ENCODE measurements at regions of chr11 and their contacts with region 1.

Region 1: GRCh38 chr11:68354148-68354872 is 41.9 kb downstream of the LRP5 start:
- DNase-seq: peak; percentile 53 to 94
- H3K4me3 ChIP-seq: peak overlapping the region in 1 of 2 donors; percentile 25
- H3K27ac ChIP-seq: peak overlapping the region; percentile 73 to 94
- H3K4me1 ChIP-seq: peaks cover 26 to 65% of the 10 kb centered on the region in 2 donors
- H3K27me3 ChIP-seq: no peaks in the 10 kb centered on the region
- CTCF ChIP-seq: no peak

Region 2: DNA sequence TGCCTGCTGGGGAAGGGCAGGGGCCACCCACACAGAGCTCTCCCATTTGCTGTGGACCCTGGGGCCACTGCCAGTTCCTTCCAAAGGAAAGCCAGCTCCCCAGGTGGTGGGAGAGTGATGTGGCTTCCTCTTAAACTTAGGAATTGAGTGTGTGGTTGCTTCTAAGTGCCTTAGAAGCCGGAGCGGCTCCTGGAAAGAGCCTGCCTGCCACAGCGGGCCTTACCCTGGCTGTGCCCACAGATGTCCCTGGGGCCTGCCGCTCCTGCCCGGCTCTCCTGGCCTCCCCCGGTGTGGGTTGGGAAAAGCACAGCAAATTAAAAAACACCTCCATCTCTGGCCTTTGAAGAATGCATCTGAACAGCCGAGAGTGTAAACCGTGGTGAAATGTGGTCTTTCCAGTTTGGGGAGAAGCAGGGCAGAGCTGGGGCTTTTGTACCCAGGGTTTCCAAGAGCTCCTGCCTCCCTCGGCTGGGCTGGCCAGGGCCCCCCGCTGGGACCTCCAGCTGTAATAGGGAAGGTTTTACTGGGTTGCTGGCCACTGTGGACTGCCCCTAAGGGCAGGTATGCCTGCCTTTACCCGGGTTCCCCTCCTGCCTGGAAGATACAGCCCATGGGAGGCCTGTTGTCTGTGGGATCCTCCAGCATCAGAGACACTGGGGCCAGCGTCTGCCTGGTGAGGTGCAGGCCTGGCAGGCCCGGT is 11.7 kb before region 1 on chr11:
- intact Hi-C with region 1: loop called (anchors 2 kb)
- DNase-seq: no peak
- H3K4me3 ChIP-seq: peak overlapping the region; percentile 1 to 29
- H3K27ac ChIP-seq: peak overlapping the region; percentile 79 to 83
- H3K4me1 ChIP-seq: peaks cover 20 to 70% of the 10 kb centered on the region in 2 donors
- H3K27me3 ChIP-seq: no peaks in the 10 kb centered on the region
- CTCF ChIP-seq: no peak

Region 3: DNA sequence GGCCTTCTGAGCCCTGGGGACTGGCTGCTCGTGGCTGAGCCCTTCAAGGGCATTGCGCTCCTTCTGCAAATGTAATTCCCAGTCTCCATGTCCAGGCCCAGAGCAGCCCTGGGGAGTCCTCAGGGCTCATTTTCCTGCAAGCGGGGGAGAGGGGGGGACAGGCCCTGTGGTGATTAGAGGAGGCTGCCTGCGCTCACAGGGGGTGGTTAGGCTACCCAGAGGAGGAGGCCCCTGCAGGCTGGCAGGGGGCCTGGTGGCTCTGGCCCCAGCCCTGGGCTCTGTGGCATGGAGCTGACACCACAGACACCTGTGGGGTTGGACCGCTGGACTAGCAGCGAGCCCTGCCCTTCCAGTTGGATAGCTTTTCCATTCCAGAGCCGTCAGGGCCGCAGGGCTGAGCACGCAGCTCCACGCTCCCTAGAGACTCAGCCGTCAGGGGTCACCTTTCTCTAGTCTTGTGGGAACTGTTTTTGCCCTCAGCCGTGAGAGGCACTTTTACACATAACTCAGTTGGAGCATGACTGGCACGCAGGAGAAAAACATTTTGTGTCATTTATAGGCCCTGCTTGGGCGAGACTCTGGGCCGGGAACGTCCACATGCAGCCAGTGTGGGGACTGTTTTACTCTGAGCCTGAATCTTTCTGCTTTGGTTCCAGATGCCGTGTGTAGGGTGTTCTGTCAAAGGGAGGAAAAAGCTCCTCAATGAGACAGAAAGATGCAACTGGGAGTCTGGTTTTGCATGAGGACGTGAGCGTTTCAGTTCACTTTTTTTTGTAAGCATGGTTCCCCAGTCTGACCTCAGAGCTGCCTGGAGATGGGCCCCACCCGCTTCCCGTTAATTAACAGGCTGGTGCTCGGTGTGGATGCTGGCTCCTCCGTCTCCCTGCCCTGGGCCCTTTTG is 16.2 kb after region 1 on chr11:
- intact Hi-C with region 1: loop called (anchors 1 kb)
- DNase-seq: no peak
- H3K4me3 ChIP-seq: no peak overlapping the region
- H3K27ac ChIP-seq: peak overlapping the region; percentile 86 to 95
- H3K4me1 ChIP-seq: peaks cover 39 to 56% of the 10 kb centered on the region in 2 donors
- H3K27me3 ChIP-seq: no peaks in the 10 kb centered on the region
- CTCF ChIP-seq: no peak

Region 4: GRCh38 chr11:68383976-68384501 is 29.7 kb after region 1 on chr11:
- intact Hi-C with region 1: no loop called
- DNase-seq: peak; percentile 28 to 88
- H3K4me3 ChIP-seq: no peak overlapping the region
- H3K27ac ChIP-seq: peak overlapping the region; percentile 69 to 78
- H3K4me1 ChIP-seq: peaks cover 24 to 47% of the 10 kb centered on the region in 2 donors
- H3K27me3 ChIP-seq: no peaks in the 10 kb centered on the region
- CTCF ChIP-seq: peak; percentile 89 to 96 (median 94)

Region 5: GRCh38 chr11:68541991-68542390 is 187.7 kb after region 1 on chr11:
- intact Hi-C with region 1: no loop called
- DNase-seq: no peak
- H3K4me3 ChIP-seq: no peak overlapping the region
- H3K27ac ChIP-seq: no peak overlapping the region
- H3K4me1 ChIP-seq: peaks cover 0 to 5% of the 10 kb centered on the region in 2 donors
- H3K27me3 ChIP-seq: no peaks in the 10 kb centered on the region
- CTCF ChIP-seq: no peak